ENCODE measurements at regions of chr10 and their contacts with region 1.

Region 1: DNA sequence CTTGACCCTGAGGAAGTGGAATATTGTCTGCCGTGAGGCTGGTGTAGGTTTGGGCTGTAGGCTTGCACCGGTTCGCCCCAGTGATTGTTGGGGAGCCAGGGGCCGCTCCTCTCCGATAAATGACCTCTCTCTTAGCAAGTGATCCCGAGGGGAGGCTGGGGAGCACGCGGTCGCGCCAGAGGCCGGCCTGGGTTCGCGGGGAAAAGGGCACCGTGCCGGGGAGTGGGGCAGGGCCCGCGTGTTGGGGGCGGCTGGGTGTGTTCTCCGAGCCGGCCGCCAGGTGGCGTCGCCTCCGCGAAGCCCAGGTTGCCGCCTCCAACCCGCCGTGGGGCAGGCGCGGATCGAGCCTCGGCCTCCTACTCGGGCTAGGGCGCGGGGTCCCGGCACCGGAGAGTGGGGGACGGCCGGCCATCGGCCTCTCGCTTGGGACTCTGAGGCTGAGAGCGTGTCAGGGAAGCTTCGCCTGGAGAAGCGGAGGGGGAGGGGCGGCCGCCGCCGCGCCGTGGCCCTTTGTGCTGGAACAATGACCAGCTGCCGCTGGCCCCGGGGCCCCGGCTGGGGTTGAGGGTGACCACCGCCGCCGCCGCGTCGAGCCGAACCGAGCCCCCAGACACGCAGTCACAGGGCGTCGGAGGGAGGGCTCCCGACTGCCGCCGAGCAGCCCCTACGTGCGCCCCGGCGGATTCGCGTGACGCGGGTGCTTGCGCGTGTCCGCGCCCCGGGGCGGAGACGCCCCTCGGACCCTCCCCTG is 442 bp upstream of the LZTS2 start:
- DNase-seq: peak; percentile 64 to 88 (median 77)
- ATAC-seq: peak; percentile 68
- H3K4me3 ChIP-seq: peak overlapping the region; percentile 81 to 97
- H3K4me3 Mint-ChIP-seq: peak overlapping the region; percentile 87
- H3K27ac ChIP-seq: peak overlapping the region; percentile 86 to 88
- H3K27ac Mint-ChIP-seq: peak overlapping the region; percentile 90
- H3K4me1 ChIP-seq: peaks cover 27% of the 10 kb centered on the region
- H3K4me1 Mint-ChIP-seq: peaks cover 23% of the 10 kb centered on the region
- H3K27me3 ChIP-seq: no peaks in the 10 kb centered on the region
- H3K27me3 Mint-ChIP-seq: no peaks in the 10 kb centered on the region
- CTCF ChIP-seq: peak; percentile 84

Region 2: GRCh38 chr10:100535715-100536353 is 463.3 kb before region 1 on chr10 and contains the start of gene HIF1AN:
- CTCF ChIA-PET with region 1: no interaction called
- POLR2A ChIA-PET with region 1: no interaction called
- intact Hi-C with region 1: loop called in 1 of 2 experiments (anchors 5 kb)
- DNase-seq: peak; percentile 73 to 97 (median 88)
- ATAC-seq: peak; percentile 99
- H3K4me3 ChIP-seq: peak within 1 kb of the TSS; percentile 59 to 82
- H3K4me3 Mint-ChIP-seq: no peak within 1 kb of the TSS
- H3K27ac ChIP-seq: peak within 1 kb of the TSS; percentile 55 to 75
- H3K27ac Mint-ChIP-seq: no peak within 1 kb of the TSS
- H3K4me1 ChIP-seq: peaks cover 29% of the 10 kb centered on the region
- H3K4me1 Mint-ChIP-seq: peaks cover 19% of the 10 kb centered on the region
- H3K27me3 ChIP-seq: no peaks in the 10 kb centered on the region
- H3K27me3 Mint-ChIP-seq: no peaks in the 10 kb centered on the region
- CTCF ChIP-seq: peak; percentile 92
- total RNA-seq, gene HIF1AN: 28.0 to 31.2 TPM

Region 3: GRCh38 chr10:100788002-100788900 is 210.9 kb before region 1 on chr10:
- CTCF ChIA-PET with region 1: no interaction called
- POLR2A ChIA-PET with region 1: no interaction called
- intact Hi-C with region 1: no loop called
- DNase-seq: no peak
- ATAC-seq: no peak
- H3K4me3 ChIP-seq: no peak overlapping the region
- H3K4me3 Mint-ChIP-seq: no peak overlapping the region
- H3K27ac ChIP-seq: no peak overlapping the region
- H3K27ac Mint-ChIP-seq: no peak overlapping the region
- H3K4me1 ChIP-seq: no peaks in the 10 kb centered on the region
- H3K4me1 Mint-ChIP-seq: no peaks in the 10 kb centered on the region
- H3K27me3 ChIP-seq: no peaks in the 10 kb centered on the region
- H3K27me3 Mint-ChIP-seq: peaks cover 29% of the 10 kb centered on the region
- CTCF ChIP-seq: no peak

Region 4: DNA sequence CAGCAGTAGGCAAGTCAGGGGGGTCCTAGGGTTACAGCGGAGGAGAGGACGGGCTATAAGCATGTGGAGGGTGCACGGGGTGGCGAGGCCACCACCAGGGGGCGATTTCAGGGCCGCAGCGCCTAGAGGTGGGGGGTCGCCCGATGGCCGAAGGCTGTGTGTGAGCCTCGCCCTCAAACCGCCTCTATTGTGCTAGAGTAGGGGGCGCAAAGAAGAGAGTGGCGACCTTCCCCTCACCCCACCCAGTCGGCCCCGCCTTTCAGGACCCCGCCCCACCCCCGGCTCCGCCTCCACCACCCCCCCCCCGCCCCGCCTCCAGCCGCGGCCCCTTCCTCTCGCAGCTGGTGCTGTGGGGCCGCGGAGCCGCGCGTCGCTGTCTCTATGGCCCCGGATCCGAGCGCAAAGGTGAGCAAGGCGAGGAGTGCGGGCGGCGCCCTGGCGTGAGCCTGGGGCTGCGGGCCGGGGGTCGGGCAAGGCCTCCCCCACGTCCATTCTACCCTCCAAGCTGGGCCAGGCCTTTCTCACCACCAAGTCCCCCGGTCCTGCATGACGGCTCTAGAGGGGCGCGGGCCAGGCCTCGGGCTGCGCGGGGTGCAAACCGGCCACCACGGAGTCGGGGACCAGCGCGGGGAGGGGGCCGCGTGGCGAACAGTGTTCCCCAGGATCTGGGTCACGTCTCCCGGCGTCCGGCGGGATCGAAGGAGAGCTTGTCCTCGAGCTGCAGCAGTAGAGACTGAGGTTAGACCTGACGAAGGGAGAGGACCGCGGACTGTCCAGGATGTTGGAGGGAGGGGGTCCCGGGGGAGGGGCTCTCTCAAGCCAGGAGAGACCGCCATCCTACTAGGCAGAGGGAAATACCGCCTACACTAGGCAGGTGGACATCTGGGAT is 29.7 kb before region 1 on chr10 and contains the start of gene SEMA4G:
- CTCF ChIA-PET with region 1: interaction called, 9 read pairs
- POLR2A ChIA-PET with region 1: no interaction called
- intact Hi-C with region 1: loop called (anchors 1 kb)
- DNase-seq: peak in 8 of 9 experiments; percentile 19 to 71 (median 52)
- ATAC-seq: peak; percentile 68
- H3K4me3 ChIP-seq: peak within 1 kb of the TSS; percentile 29 to 56
- H3K4me3 Mint-ChIP-seq: peak within 1 kb of the TSS; percentile 74
- H3K27ac ChIP-seq: no peak within 1 kb of the TSS
- H3K27ac Mint-ChIP-seq: no peak within 1 kb of the TSS
- H3K4me1 ChIP-seq: peaks cover 13% of the 10 kb centered on the region
- H3K4me1 Mint-ChIP-seq: peaks cover 15% of the 10 kb centered on the region
- H3K27me3 ChIP-seq: no peaks in the 10 kb centered on the region
- H3K27me3 Mint-ChIP-seq: no peaks in the 10 kb centered on the region
- CTCF ChIP-seq: peak; percentile 58
- total RNA-seq, gene SEMA4G: 0.35 to 0.61 TPM

Region 5: DNA sequence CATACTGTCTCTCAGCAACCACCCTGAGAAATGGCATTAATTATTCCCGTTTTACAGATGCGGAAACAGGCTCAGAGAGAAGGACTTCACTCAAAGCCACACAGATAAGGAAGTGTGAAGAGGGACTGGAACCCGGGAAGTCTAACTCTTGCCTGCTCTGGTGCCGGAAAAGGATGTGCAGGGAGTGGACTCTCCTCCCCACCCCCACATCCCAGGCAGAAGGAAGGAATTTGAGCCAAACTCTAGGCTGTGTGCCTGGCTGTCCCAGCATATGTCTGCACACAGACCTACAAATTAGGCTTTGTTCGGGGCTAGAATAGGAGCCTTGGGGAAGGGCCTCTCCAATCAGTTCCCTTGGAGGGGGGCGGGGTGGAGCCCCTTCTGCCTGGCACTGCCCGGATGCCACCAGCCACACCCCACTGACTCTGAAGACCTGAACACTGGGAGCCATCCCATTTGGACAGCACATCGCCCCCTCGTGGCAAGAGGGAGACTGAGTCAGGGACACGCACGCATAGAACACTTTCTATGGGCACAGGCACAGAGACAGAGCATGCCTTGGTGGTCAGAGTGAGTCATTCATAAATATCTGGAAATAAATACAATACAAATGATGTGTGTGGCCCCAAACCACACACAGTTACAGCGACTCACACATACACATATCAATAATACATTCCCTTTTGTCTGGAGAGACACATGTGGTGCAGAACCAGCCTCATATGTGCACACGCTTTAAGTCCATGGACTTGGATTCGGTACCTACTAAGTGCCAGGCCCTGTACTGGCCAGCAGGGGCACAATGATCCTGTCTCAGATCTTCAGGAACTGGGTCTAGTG is 13.6 kb after region 1 on chr10:
- CTCF ChIA-PET with region 1: interaction called, 222 read pairs
- POLR2A ChIA-PET with region 1: interaction called, 19 read pairs
- intact Hi-C with region 1: loop called (anchors 1 kb)
- DNase-seq: peak; percentile 41 to 85 (median 78)
- ATAC-seq: peak; percentile 86
- H3K4me3 ChIP-seq: no peak overlapping the region
- H3K4me3 Mint-ChIP-seq: no peak overlapping the region
- H3K27ac ChIP-seq: no peak overlapping the region
- H3K27ac Mint-ChIP-seq: no peak overlapping the region
- H3K4me1 ChIP-seq: peaks cover 6% of the 10 kb centered on the region
- H3K4me1 Mint-ChIP-seq: peaks cover 13% of the 10 kb centered on the region
- H3K27me3 ChIP-seq: peaks cover 13 to 16% of the 10 kb centered on the region in 2 experiments
- H3K27me3 Mint-ChIP-seq: peaks cover 33% of the 10 kb centered on the region
- CTCF ChIP-seq: peak; percentile 83

Region 6: DNA sequence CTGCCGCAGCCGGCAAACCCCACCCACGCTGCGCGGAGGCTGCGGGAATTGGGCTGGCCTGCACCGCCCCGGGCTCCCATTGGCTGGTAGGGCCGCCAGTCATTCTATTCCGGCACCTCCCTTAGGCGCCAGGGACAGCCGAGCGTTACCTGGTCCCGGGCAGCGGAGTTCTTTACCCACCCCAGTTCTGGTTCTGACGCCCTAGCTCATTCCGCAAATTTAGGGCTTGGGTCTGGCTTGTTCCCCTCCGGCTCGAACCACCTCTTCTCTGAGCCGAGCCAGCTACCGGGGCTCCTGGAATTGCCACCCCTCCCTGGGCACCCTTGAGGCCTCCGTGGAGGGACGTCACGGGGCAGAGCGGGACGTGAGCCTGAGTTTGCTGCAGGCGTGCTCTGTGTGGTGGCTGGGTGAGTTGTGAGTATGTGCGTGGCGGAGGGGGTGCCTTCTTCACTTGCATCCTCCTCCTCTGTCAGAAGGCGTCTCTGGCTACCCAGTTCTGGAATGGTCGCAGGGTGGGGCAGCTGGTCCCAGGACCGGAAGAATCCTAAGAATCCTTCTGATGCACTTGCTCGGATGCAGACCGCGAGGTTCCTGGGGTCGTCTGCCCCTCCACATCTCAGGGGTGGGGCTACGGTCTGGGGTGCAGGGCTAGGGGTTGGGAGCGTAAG is 32.1 kb after region 1 on chr10 and contains the starts of genes PDZD7 and SFXN3:
- CTCF ChIA-PET with region 1: interaction called, 8 read pairs
- POLR2A ChIA-PET with region 1: interaction called, 22 read pairs
- intact Hi-C with region 1: loop called (anchors 1 kb)
- DNase-seq: peak; percentile 91 to 98 (median 96)
- ATAC-seq: peak; percentile 76
- H3K4me3 ChIP-seq: peak within 1 kb of the TSS; percentile 86 to 91
- H3K4me3 Mint-ChIP-seq: peak within 1 kb of the TSS; percentile 91
- H3K27ac ChIP-seq: peak within 1 kb of the TSS; percentile 87 to 98
- H3K27ac Mint-ChIP-seq: peak within 1 kb of the TSS; percentile 91
- H3K4me1 ChIP-seq: peaks cover 14% of the 10 kb centered on the region
- H3K4me1 Mint-ChIP-seq: peaks cover 23% of the 10 kb centered on the region
- H3K27me3 ChIP-seq: no peaks in the 10 kb centered on the region
- H3K27me3 Mint-ChIP-seq: no peaks in the 10 kb centered on the region
- CTCF ChIP-seq: no peak
- total RNA-seq, gene PDZD7: 0.95 to 1.7 TPM
- total RNA-seq, gene SFXN3: 38.1 to 39.3 TPM

Region 7: GRCh38 chr10:101693978-101694673 is 695.0 kb after region 1 on chr10:
- CTCF ChIA-PET with region 1: no interaction called
- POLR2A ChIA-PET with region 1: no interaction called
- intact Hi-C with region 1: loop called in 1 of 2 experiments (anchors 10 kb)
- DNase-seq: peak; percentile 42 to 83 (median 70)
- ATAC-seq: peak; percentile 66
- H3K4me3 ChIP-seq: peak overlapping the region; percentile 85 to 88
- H3K4me3 Mint-ChIP-seq: peak overlapping the region; percentile 97
- H3K27ac ChIP-seq: peak overlapping the region; percentile 97 to 99
- H3K27ac Mint-ChIP-seq: peak overlapping the region; percentile 99
- H3K4me1 ChIP-seq: peaks cover 36% of the 10 kb centered on the region
- H3K4me1 Mint-ChIP-seq: peaks cover 48% of the 10 kb centered on the region
- H3K27me3 ChIP-seq: no peaks in the 10 kb centered on the region
- H3K27me3 Mint-ChIP-seq: no peaks in the 10 kb centered on the region
- CTCF ChIP-seq: no peak

Measured in CD8-positive, alpha-beta T cell (primary cell).